ENCODE measurements at regions of chr11 and their contacts with region 1.

Region 1: DNA sequence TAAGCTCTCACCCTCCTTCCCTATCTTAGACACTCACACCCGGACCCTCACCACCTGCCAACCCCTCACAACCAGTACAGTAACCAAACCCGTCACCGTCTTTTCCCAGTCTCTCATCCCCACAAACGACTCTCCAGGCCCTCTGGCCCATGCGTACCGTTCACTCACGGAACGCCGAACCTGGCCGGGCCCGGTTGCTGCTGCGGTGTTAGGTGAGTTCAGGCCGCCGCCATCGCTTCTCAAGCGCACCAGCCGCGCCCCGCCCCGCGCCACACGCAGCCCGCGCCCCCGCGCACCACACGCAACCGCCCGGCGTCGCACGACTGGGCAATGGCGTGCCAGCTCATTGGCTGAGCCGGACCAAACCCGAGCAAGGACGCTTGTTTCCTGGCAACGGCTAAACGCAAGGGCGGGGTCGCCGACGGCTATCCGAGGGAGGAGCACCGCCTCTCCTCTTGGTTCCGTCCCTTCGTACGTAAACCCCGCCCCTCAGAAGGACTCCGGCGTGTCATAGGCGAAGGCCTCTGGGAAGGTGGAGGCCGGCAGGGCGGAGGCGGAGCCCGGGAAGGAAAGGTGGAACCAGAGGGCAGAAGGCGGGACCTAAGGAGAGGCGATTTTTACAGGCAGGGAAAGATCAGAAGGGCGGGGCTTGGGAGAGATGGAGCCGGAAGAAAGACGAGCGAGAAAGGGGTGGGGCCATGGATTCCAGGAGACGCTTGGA is at the start of gene FHIP1B:
- DNase-seq: peak; percentile 99 to 100
- ATAC-seq: peak; percentile 97 to 99 (median 98)
- H3K4me3 ChIP-seq: peak within 1 kb of the TSS; percentile 52 to 84 (median 74)
- H3K27ac ChIP-seq: peak within 1 kb of the TSS in 9 of 10 donors; percentile 83 to 92 (median 86)
- H3K4me1 ChIP-seq: peaks cover 3 to 41% (median 21%) of the 10 kb centered on the region in 9 donors
- H3K27me3 ChIP-seq: no peaks in the 10 kb centered on the region
- CTCF ChIP-seq: peak in 2 of 9 donors; percentile 3 to 17
- total RNA-seq, gene FHIP1B: 13.4 to 17.3 (median 14.3) TPM

Region 2: GRCh38 chr11:6196396-6196795 is 38.2 kb before region 1 on chr11:
- intact Hi-C with region 1: no loop called
- DNase-seq: no peak
- ATAC-seq: no peak
- H3K4me3 ChIP-seq: no peak overlapping the region
- H3K27ac ChIP-seq: no peak overlapping the region
- H3K4me1 ChIP-seq: peaks cover 0 to 21% (median 0%) of the 10 kb centered on the region in 9 donors
- H3K27me3 ChIP-seq: no peaks in the 10 kb centered on the region
- CTCF ChIP-seq: no peak

Region 3: DNA sequence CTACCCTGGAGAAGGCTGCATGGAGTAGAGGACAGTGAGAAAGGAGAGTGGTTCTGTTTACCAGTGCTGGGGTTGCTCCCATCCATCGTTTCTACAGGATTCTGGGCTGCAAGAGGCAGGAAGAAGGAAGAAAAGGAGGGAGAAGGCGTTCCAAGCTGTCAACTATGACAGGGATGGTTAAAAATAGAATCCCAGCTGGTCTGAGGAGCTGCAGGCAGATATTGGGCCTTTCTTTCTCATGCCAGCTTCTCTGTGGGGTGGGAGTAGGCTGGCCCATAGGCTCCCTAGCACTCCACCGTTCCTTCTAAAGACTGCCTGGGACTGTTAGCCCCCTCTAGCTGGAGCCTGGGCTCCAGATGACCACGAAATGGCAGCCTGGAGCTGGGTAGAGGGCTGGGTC is 38.6 kb after region 1 on chr11:
- intact Hi-C with region 1: no loop called
- DNase-seq: no peak
- ATAC-seq: peak in 7 of 8 donors; percentile 28 to 88 (median 80)
- H3K4me3 ChIP-seq: no peak overlapping the region
- H3K27ac ChIP-seq: peak overlapping the region in 4 of 10 donors; percentile 12 to 56 (median 37)
- H3K4me1 ChIP-seq: peaks cover 0 to 24% (median 10%) of the 10 kb centered on the region in 9 donors
- H3K27me3 ChIP-seq: peaks cover 0 to 5% (median 0%) of the 10 kb centered on the region in 7 donors
- CTCF ChIP-seq: no peak

Region 4: DNA sequence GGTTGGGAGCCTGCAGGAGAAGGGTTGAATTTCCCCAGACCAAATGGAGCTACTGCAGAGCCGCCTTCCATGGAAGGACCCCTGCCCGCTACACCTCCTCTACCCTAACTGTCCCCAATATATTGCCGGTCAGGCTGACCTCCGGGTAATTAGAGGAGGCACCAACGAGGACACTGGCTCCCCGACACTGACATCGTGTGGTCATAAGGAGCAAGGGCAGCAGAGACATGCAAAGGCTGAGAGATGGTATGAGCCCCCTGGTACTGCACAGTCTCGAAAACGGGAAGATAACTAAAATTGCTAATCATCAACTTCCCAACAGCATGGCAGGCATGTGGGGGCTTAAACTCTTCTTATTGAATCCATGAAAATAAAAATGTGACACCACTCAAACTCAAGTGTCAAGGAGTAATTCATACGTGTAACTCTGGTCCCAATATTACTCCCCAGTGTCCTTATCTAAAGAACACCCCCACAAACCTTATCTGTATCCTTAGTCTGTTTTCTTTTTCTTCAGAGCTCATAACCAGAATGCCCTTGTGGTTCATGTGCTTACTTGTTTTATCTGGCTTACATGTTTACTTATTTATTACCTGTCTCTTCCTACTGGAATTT is 81.4 kb after region 1 on chr11:
- intact Hi-C with region 1: loop called in 3 of 10 experiments (anchors 2 to 10 kb)
- DNase-seq: peak; percentile 49 to 51
- ATAC-seq: peak in 3 of 8 donors; percentile 11 to 32 (median 17)
- H3K4me3 ChIP-seq: peak overlapping the region in 5 of 10 donors; percentile 15 to 33 (median 22)
- H3K27ac ChIP-seq: peak overlapping the region in 5 of 10 donors; percentile 1 to 100 (median 33)
- H3K4me1 ChIP-seq: peaks cover 6 to 52% (median 33%) of the 10 kb centered on the region in 9 donors
- H3K27me3 ChIP-seq: peaks cover 0 to 21% (median 0%) of the 10 kb centered on the region in 7 donors
- CTCF ChIP-seq: peak; percentile 77 to 94 (median 88)

Measured in heart right ventricle (tissue), 16 donors.